Activated T-helper 2 cell treated with anti-CD3 and anti-CD28 coated beads, Interferon-gamma antibody, Interleukin-2, Interleukin-4, amounts not matched to agents 10 μg/mL and 5 μg/mL and 100 μg/mL, durations not matched to agents 14 hours and 24 hours and 36 hours (primary cell): ENCODE measurements at regions of chr2 and their contacts with region 1.

Region 1: GRCh38 chr2:44479122-44479887 is 117.6 kb downstream of the CAMKMT start:
- DNase-seq: peak; percentile 29
- H3K4me3 Mint-ChIP-seq: no peak overlapping the region
- H3K27ac Mint-ChIP-seq: no peak overlapping the region
- H3K4me1 Mint-ChIP-seq: peaks cover 4% of the 10 kb centered on the region
- H3K27me3 Mint-ChIP-seq: no peaks in the 10 kb centered on the region

Region 2: GRCh38 chr2:44668336-44668735 is 189.0 kb after region 1 on chr2:
- intact Hi-C with region 1: loop called (anchors 2 kb)
- DNase-seq: no peak
- H3K4me3 Mint-ChIP-seq: no peak overlapping the region
- H3K27ac Mint-ChIP-seq: no peak overlapping the region
- H3K4me1 Mint-ChIP-seq: no peaks in the 10 kb centered on the region
- H3K27me3 Mint-ChIP-seq: peaks cover 5% of the 10 kb centered on the region